GM12878 (cell line): ENCODE measurements at regions of chr2 and their contacts with region 1.

Region 1: GRCh38 chr2:65031341-65032018 is 24.7 kb upstream of the CEP68 start:
- DNase-seq: no peak
- ATAC-seq: peak; percentile 41
- H3K4me3 ChIP-seq: peak overlapping the region; percentile 46
- H3K27ac ChIP-seq: peak overlapping the region; percentile 73
- H3K4me1 ChIP-seq: peaks cover 51% of the 10 kb centered on the region
- H3K27me3 ChIP-seq: no peaks in the 10 kb centered on the region
- CTCF ChIP-seq: no peak
- EP300 ChIP-seq: no peak
- POLR2A ChIP-seq: no peak
- RAD21 ChIP-seq: no peak

Region 2: DNA sequence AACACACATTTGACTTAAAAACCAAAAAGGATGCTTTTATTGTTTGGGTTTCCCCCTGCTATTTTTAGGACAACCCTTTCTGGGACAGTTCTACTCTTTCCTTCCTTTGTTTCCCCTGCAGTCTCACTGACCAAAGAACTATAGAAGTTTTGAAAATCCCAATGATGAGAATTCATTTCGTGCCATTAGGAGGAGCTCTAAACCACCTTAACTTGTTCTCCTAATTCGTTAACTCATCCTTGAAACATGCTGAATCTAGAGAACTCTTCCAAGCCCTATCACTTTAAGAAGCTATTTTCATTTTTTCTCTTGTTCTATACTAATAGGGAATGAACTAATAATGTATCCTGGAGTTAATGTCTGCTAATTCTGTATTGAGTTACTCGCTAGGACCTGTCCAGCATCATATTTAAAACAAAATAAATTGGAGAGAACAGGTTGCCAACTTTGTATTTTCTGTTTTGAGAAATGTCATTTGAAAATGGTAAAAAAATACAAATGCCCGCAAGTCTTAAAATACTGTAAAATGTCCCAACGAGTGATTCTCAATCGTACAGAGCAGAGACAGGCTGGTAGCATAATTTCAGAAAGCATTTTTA is 444.5 kb before region 1 on chr2:
- CTCF ChIA-PET with region 1: interaction called, 5 read pairs
- POLR2A ChIA-PET with region 1: no interaction called
- RAD21 ChIA-PET with region 1: interaction called, 4 read pairs
- SMC1A ChIA-PET with region 1: interaction called, 4 read pairs
- in situ Hi-C with region 1: loop called (anchors 10 kb)
- intact Hi-C with region 1: loop called (anchors 2 kb)
- DNase-seq: no peak
- ATAC-seq: peak; percentile 30
- H3K4me3 ChIP-seq: no peak overlapping the region
- H3K27ac ChIP-seq: no peak overlapping the region
- H3K4me1 ChIP-seq: peaks cover 40% of the 10 kb centered on the region
- H3K27me3 ChIP-seq: no peaks in the 10 kb centered on the region
- CTCF ChIP-seq: peak; percentile 54 to 77 (median 63)
- EP300 ChIP-seq: no peak
- POLR2A ChIP-seq: no peak
- RAD21 ChIP-seq: peak; percentile 83

Region 3: GRCh38 chr2:64873472-64873924 is 158.0 kb before region 1 on chr2:
- CTCF ChIA-PET with region 1: interaction called, 7 read pairs
- POLR2A ChIA-PET with region 1: no interaction called
- RAD21 ChIA-PET with region 1: interaction called, 5 read pairs
- SMC1A ChIA-PET with region 1: interaction called, 6 read pairs
- in situ Hi-C with region 1: no loop called
- intact Hi-C with region 1: loop called (anchors 1 kb)
- DNase-seq: no peak
- ATAC-seq: peak; percentile 98
- H3K4me3 ChIP-seq: peak overlapping the region; percentile 23; the same call in 1 of the 2 replicates
- H3K27ac ChIP-seq: no peak overlapping the region
- H3K4me1 ChIP-seq: peaks cover 9% of the 10 kb centered on the region
- H3K27me3 ChIP-seq: no peaks in the 10 kb centered on the region
- CTCF ChIP-seq: peak; percentile 94 to 99 (median 98)
- EP300 ChIP-seq: no peak
- POLR2A ChIP-seq: no peak
- RAD21 ChIP-seq: peak; percentile 89

Region 4: GRCh38 chr2:64932371-64933216 is 98.9 kb before region 1 on chr2:
- CTCF ChIA-PET with region 1: interaction called, 16 read pairs
- POLR2A ChIA-PET with region 1: interaction called, 3 read pairs
- RAD21 ChIA-PET with region 1: interaction called, 26 read pairs
- SMC1A ChIA-PET with region 1: interaction called, 19 read pairs
- in situ Hi-C with region 1: no loop called
- intact Hi-C with region 1: loop called (anchors 5 kb)
- DNase-seq: peak; percentile 98
- ATAC-seq: peak; percentile 81
- H3K4me3 ChIP-seq: peak overlapping the region; percentile 96
- H3K27ac ChIP-seq: peak overlapping the region; percentile 95
- H3K4me1 ChIP-seq: peaks cover 28% of the 10 kb centered on the region
- H3K27me3 ChIP-seq: no peaks in the 10 kb centered on the region
- CTCF ChIP-seq: no peak
- EP300 ChIP-seq: peak; percentile 62 to 83; a peak in 3 of 4 replicates
- POLR2A ChIP-seq: peak; percentile 84
- RAD21 ChIP-seq: 0 out of 2 replicates have a peak, but pooled peaks have one; percentile 1

Region 5: GRCh38 chr2:64945973-64946768 is 85.3 kb before region 1 on chr2:
- CTCF ChIA-PET with region 1: interaction called, 9 read pairs
- POLR2A ChIA-PET with region 1: interaction called, 3 read pairs
- RAD21 ChIA-PET with region 1: interaction called, 5 read pairs
- SMC1A ChIA-PET with region 1: interaction called, 10 read pairs
- in situ Hi-C with region 1: no loop called
- intact Hi-C with region 1: no loop called
- DNase-seq: peak; percentile 79
- ATAC-seq: peak; percentile 96
- H3K4me3 ChIP-seq: peak overlapping the region; percentile 35
- H3K27ac ChIP-seq: peak overlapping the region; percentile 91
- H3K4me1 ChIP-seq: peaks cover 48% of the 10 kb centered on the region
- H3K27me3 ChIP-seq: no peaks in the 10 kb centered on the region
- CTCF ChIP-seq: no peak
- EP300 ChIP-seq: peak; percentile 93 to 97
- POLR2A ChIP-seq: peak; percentile 96
- RAD21 ChIP-seq: peak; percentile 1; the same call in 1 of the 2 replicates

Region 6: DNA sequence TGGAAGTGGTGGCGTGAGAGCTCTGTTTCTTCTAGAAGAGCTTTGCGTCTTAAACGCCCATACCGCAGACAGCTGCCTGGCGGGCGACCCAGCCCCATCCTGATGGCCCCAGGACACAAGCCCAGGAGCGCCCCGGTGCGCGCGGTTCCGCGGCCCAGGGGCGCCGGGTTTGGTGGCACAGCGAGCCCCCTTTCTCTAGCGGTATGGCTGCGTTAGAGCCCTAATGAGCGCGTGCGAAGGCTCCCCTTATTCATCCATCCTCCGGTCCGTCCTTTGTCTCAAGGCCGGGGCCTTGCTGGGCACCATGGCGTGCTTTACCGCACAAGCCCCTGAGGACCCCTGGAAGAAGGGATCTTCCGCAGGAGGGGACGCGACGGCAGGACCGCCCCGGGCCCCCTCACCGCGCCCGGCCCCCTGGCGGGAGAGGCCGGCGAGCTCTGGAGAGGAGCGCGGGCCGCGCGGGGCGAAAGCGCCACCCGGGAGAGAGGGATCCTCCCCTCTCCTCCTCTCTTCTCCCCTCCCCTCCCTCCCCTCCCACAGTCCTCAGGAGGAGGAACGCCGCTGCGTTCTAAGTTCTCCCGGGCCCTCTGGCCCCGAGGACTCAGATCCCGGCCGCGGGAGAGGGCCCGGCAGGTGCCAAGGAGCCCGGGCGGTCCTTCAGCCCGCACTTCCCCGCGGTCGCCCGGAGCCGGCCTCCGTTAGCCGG is 42.9 kb before region 1 on chr2:
- CTCF ChIA-PET with region 1: interaction called, 5 read pairs
- POLR2A ChIA-PET with region 1: interaction called, 5 read pairs
- RAD21 ChIA-PET with region 1: interaction called, 16 read pairs
- SMC1A ChIA-PET with region 1: interaction called, 31 read pairs
- in situ Hi-C with region 1: no loop called
- intact Hi-C with region 1: loop called (anchors 5 kb)
- DNase-seq: no peak
- ATAC-seq: peak; percentile 46
- H3K4me3 ChIP-seq: peak overlapping the region; percentile 99
- H3K27ac ChIP-seq: peak overlapping the region; percentile 89
- H3K4me1 ChIP-seq: peaks cover 28% of the 10 kb centered on the region
- H3K27me3 ChIP-seq: no peaks in the 10 kb centered on the region
- CTCF ChIP-seq: peak; percentile 18 to 33 (median 20); a peak in 3 of 6 replicates
- EP300 ChIP-seq: peak; percentile 53 to 84; a peak in 3 of 4 replicates
- POLR2A ChIP-seq: peak; percentile 59
- RAD21 ChIP-seq: no peak

Region 7: DNA sequence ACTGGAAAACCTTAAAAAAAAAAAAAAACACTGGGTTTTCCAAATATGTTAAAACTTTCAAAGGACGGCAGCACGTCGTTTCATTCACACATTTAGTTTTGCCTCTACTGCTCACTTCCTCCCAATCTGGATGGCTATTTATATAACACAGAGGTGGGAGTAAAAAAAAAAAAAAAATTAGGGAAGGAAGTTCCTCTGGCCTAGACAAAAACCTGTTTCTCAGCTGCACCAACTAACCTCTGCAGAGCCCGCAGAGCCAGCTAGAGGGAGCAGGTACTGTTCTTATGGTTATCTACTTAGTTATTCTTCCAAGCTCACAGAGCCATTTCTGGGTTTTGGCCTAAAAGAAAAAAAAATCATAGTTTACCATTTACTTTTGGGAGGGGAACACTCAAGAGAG is 14.1 kb before region 1 on chr2:
- CTCF ChIA-PET with region 1: interaction called, 20 read pairs
- POLR2A ChIA-PET with region 1: interaction called, 7 read pairs
- RAD21 ChIA-PET with region 1: interaction called, 6 read pairs
- SMC1A ChIA-PET with region 1: interaction called, 13 read pairs
- in situ Hi-C with region 1: no loop called
- intact Hi-C with region 1: no loop called
- DNase-seq: no peak
- ATAC-seq: peak; percentile 72
- H3K4me3 ChIP-seq: no peak overlapping the region
- H3K27ac ChIP-seq: peak overlapping the region; percentile 38
- H3K4me1 ChIP-seq: peaks cover 24% of the 10 kb centered on the region
- H3K27me3 ChIP-seq: no peaks in the 10 kb centered on the region
- CTCF ChIP-seq: peak; percentile 46 to 53 (median 51); a peak in 5 of 6 replicates
- EP300 ChIP-seq: no peak
- POLR2A ChIP-seq: no peak
- RAD21 ChIP-seq: peak; percentile 52; the same call in 1 of the 2 replicates